MCF 10A (cell line): ENCODE measurements at regions of chr22 and their contacts with region 1.

Region 1: GRCh38 chr22:27474711-27475547 is 326.6 kb downstream of the MN1 start:
- DNase-seq: peak; percentile 98
- H3K4me3 Mint-ChIP-seq: peak overlapping the region; percentile 57
- H3K27ac Mint-ChIP-seq: peak overlapping the region; percentile 94
- H3K4me1 Mint-ChIP-seq: peaks cover 47% of the 10 kb centered on the region
- H3K27me3 Mint-ChIP-seq: no peaks in the 10 kb centered on the region
- CTCF ChIP-seq: no peak

Region 2: GRCh38 chr22:27420817-27421361 is 54.0 kb before region 1 on chr22:
- CTCF ChIA-PET with region 1: interaction called, 16 read pairs
- POLR2A ChIA-PET with region 1: interaction called, 63 read pairs
- intact Hi-C with region 1: loop called (anchors 5 kb)
- DNase-seq: peak; percentile 96
- H3K4me3 Mint-ChIP-seq: peak overlapping the region; percentile 65
- H3K27ac Mint-ChIP-seq: peak overlapping the region; percentile 90
- H3K4me1 Mint-ChIP-seq: peaks cover 46% of the 10 kb centered on the region
- H3K27me3 Mint-ChIP-seq: no peaks in the 10 kb centered on the region
- CTCF ChIP-seq: no peak

Region 3: GRCh38 chr22:27445881-27446280 is 29.0 kb before region 1 on chr22:
- CTCF ChIA-PET with region 1: no interaction called
- POLR2A ChIA-PET with region 1: no interaction called
- intact Hi-C with region 1: no loop called
- DNase-seq: no peak
- H3K4me3 Mint-ChIP-seq: no peak overlapping the region
- H3K27ac Mint-ChIP-seq: no peak overlapping the region
- H3K4me1 Mint-ChIP-seq: no peaks in the 10 kb centered on the region
- H3K27me3 Mint-ChIP-seq: no peaks in the 10 kb centered on the region
- CTCF ChIP-seq: no peak

Region 4: GRCh38 chr22:27461470-27461869 is 13.5 kb before region 1 on chr22:
- CTCF ChIA-PET with region 1: interaction called, 8 read pairs
- POLR2A ChIA-PET with region 1: interaction called, 26 read pairs
- intact Hi-C with region 1: loop called (anchors 1 kb)
- DNase-seq: peak; percentile 54
- H3K4me3 Mint-ChIP-seq: no peak overlapping the region
- H3K27ac Mint-ChIP-seq: peak overlapping the region; percentile 68
- H3K4me1 Mint-ChIP-seq: peaks cover 36% of the 10 kb centered on the region
- H3K27me3 Mint-ChIP-seq: no peaks in the 10 kb centered on the region
- CTCF ChIP-seq: no peak

Region 5: DNA sequence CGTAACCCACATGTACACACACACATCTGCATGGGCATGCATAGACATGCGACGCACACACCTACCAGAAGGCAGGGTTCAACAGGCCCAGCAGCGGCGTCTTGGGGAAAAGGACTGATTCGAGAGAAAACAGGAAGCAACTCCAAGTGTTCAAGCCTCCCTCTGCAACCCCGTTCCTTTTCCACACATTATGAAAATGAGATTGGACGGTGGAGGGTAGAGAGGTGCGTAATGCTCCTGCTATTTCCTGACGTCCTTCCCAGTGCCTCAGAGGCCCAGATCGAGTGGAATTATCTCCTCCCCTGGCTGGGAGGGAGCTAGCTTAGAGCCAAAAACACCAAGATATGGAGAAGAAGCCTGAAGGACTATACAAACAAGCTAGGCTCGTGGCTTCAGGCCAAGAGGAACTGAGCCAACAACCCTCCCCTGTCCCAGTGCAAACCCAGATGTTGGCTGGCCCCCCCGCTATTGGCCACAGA is 37.4 kb after region 1 on chr22:
- CTCF ChIA-PET with region 1: interaction called, 7 read pairs
- POLR2A ChIA-PET with region 1: interaction called, 16 read pairs
- intact Hi-C with region 1: no loop called
- DNase-seq: peak; percentile 90
- H3K4me3 Mint-ChIP-seq: peak overlapping the region; percentile 9
- H3K27ac Mint-ChIP-seq: peak overlapping the region; percentile 74
- H3K4me1 Mint-ChIP-seq: peaks cover 40% of the 10 kb centered on the region
- H3K27me3 Mint-ChIP-seq: no peaks in the 10 kb centered on the region
- CTCF ChIP-seq: no peak

Region 6: GRCh38 chr22:27531782-27532530 is 57.0 kb after region 1 on chr22:
- CTCF ChIA-PET with region 1: no interaction called
- POLR2A ChIA-PET with region 1: no interaction called
- intact Hi-C with region 1: no loop called
- DNase-seq: peak; percentile 33
- H3K4me3 Mint-ChIP-seq: no peak overlapping the region
- H3K27ac Mint-ChIP-seq: no peak overlapping the region
- H3K4me1 Mint-ChIP-seq: peaks cover 6% of the 10 kb centered on the region
- H3K27me3 Mint-ChIP-seq: no peaks in the 10 kb centered on the region
- CTCF ChIP-seq: no peak

Region 7: GRCh38 chr22:27546157-27546935 is 71.4 kb after region 1 on chr22:
- CTCF ChIA-PET with region 1: no interaction called
- POLR2A ChIA-PET with region 1: no interaction called
- intact Hi-C with region 1: no loop called
- DNase-seq: no peak
- H3K4me3 Mint-ChIP-seq: no peak overlapping the region
- H3K27ac Mint-ChIP-seq: no peak overlapping the region
- H3K4me1 Mint-ChIP-seq: no peaks in the 10 kb centered on the region
- H3K27me3 Mint-ChIP-seq: no peaks in the 10 kb centered on the region
- CTCF ChIP-seq: no peak